B cell (primary cell): ENCODE measurements at regions of chr12 and their contacts with region 1.

Region 1: DNA sequence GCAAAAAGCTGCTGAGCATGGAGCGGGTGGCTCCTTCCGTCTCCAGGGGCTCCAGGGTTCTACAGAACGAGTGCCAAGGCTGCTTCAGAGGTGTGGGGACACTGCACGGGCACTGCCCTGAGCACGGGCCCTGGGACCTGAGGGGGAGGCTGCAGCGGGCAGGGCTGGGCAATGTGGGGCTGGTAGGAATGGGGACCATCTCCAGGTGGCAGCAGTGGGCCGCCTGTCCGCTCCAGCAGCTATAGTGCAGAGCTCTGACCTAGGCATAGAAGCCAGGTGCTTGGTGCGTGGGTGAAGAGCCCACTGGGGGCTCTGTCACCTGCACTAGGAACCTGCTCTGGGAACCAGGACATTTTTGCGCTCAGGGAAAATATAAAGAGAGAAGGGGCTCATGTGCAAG is 22.3 kb downstream of the HDAC7 start:
- DNase-seq: peak; percentile 68
- ATAC-seq: peak; percentile 87
- H3K4me3 ChIP-seq: no peak overlapping the region
- H3K4me3 Mint-ChIP-seq: no peak overlapping the region
- H3K27ac ChIP-seq: no peak overlapping the region
- H3K27ac Mint-ChIP-seq: peak overlapping the region; percentile 84
- H3K4me1 ChIP-seq: peaks cover 12 to 26% of the 10 kb centered on the region in 2 donors
- H3K4me1 Mint-ChIP-seq: peaks cover 22% of the 10 kb centered on the region
- H3K27me3 ChIP-seq: no peaks in the 10 kb centered on the region
- H3K27me3 Mint-ChIP-seq: no peaks in the 10 kb centered on the region
- CTCF ChIP-seq: peak; percentile 38

Region 2: DNA sequence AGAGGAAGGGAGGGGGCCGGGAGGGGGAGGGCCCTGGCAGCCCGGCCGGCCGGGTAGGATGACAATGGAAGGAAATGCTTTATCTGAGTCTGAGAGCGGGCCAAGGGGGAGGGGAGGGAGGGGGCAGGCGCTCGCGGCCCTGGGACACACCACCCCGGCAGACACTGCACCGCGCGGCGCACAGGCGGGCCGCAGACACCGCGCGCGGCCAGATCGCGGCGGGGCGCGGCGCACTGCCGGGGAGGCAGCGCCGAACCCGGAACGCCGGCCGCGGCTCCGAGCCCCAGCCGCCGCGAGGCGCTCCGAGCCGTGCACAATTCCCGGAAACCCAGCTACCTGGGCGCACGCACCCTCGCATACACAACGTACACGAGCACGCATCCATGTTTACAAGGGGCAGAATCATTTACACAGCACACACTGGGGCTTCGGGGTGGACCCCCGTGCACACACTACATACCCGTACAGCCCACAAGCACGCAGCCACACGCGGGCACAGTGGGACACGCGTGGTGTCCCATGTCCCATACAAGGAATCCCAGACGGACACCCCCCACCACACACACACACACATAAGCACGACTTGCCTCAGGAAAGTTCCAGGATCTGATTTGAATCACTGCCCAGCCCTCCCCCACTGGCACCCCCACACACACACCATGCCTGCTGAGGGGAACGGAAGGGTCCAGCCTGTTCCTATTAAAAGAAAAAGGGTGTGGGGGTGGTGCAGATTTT is 22.6 kb after region 1 on chr12 and contains the start of gene HDAC7:
- CTCF ChIA-PET with region 1: interaction called, 76 read pairs
- POLR2A ChIA-PET with region 1: no interaction called
- intact Hi-C with region 1: no loop called
- DNase-seq: peak; percentile 82
- ATAC-seq: peak; percentile 74
- H3K4me3 ChIP-seq: peak within 1 kb of the TSS; percentile 58 to 76 (median 73)
- H3K4me3 Mint-ChIP-seq: peak within 1 kb of the TSS; percentile 96
- H3K27ac ChIP-seq: peak within 1 kb of the TSS; percentile 67 to 96
- H3K27ac Mint-ChIP-seq: peak within 1 kb of the TSS; percentile 97
- H3K4me1 ChIP-seq: peaks cover 51 to 64% of the 10 kb centered on the region in 2 donors
- H3K4me1 Mint-ChIP-seq: peaks cover 67% of the 10 kb centered on the region
- H3K27me3 ChIP-seq: no peaks in the 10 kb centered on the region
- H3K27me3 Mint-ChIP-seq: no peaks in the 10 kb centered on the region
- CTCF ChIP-seq: no peak
- total RNA-seq, gene HDAC7: 175 and 178 TPM in 2 replicates

Region 3: GRCh38 chr12:47870175-47870781 is 72.8 kb after region 1 on chr12:
- CTCF ChIA-PET with region 1: no interaction called
- POLR2A ChIA-PET with region 1: no interaction called
- intact Hi-C with region 1: no loop called
- DNase-seq: no peak
- ATAC-seq: peak; percentile 41
- H3K4me3 ChIP-seq: no peak overlapping the region
- H3K4me3 Mint-ChIP-seq: no peak overlapping the region
- H3K27ac ChIP-seq: peak overlapping the region in 1 of 2 donors; percentile 15
- H3K27ac Mint-ChIP-seq: no peak overlapping the region
- H3K4me1 ChIP-seq: peaks cover 24 to 36% of the 10 kb centered on the region in 2 donors
- H3K4me1 Mint-ChIP-seq: peaks cover 31% of the 10 kb centered on the region
- H3K27me3 ChIP-seq: no peaks in the 10 kb centered on the region
- H3K27me3 Mint-ChIP-seq: no peaks in the 10 kb centered on the region
- CTCF ChIP-seq: peak; percentile 20

Region 4: GRCh38 chr12:47930634-47931033 is 133.2 kb after region 1 on chr12:
- CTCF ChIA-PET with region 1: no interaction called
- POLR2A ChIA-PET with region 1: interaction called, 10 read pairs
- intact Hi-C with region 1: no loop called
- DNase-seq: no peak
- ATAC-seq: no peak
- H3K4me3 ChIP-seq: no peak overlapping the region
- H3K4me3 Mint-ChIP-seq: no peak overlapping the region
- H3K27ac ChIP-seq: no peak overlapping the region
- H3K27ac Mint-ChIP-seq: no peak overlapping the region
- H3K4me1 ChIP-seq: no peaks in the 10 kb centered on the region
- H3K4me1 Mint-ChIP-seq: no peaks in the 10 kb centered on the region
- H3K27me3 ChIP-seq: peaks cover 0 to 11% (median 2%) of the 10 kb centered on the region in 4 experiments
- H3K27me3 Mint-ChIP-seq: peaks cover 35% of the 10 kb centered on the region
- CTCF ChIP-seq: no peak

Region 5: GRCh38 chr12:48671231-48671856 is 873.9 kb after region 1 on chr12:
- CTCF ChIA-PET with region 1: no interaction called
- POLR2A ChIA-PET with region 1: no interaction called
- intact Hi-C with region 1: no loop called
- DNase-seq: no peak
- ATAC-seq: no peak
- H3K4me3 ChIP-seq: no peak overlapping the region
- H3K4me3 Mint-ChIP-seq: no peak overlapping the region
- H3K27ac ChIP-seq: no peak overlapping the region
- H3K27ac Mint-ChIP-seq: no peak overlapping the region
- H3K4me1 ChIP-seq: no peaks in the 10 kb centered on the region
- H3K4me1 Mint-ChIP-seq: no peaks in the 10 kb centered on the region
- H3K27me3 ChIP-seq: no peaks in the 10 kb centered on the region
- H3K27me3 Mint-ChIP-seq: no peaks in the 10 kb centered on the region
- CTCF ChIP-seq: no peak